ENCODE measurements at regions of chrX and their contacts with region 1.

Region 1: DNA sequence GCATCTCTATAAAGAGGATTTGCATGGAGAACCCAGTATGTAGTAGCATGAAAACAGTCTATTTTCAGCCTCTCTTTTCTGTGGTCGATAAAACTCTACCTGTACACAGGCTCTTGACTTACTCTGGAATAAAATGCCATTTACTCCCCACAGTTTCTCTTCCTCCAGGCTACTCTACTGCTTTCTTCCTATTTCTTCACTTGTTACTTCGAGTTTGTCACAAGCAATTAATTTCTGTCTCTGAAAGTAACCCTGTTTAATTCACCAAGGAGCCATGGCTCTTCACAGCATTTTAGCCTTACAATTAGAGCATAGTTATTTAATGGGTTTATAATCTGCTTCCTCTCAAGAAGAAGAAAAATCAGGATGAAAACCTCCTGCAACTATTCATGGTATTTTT is 472.9 kb upstream of the PRKX start:
- DNase-seq: no peak

Region 2: DNA sequence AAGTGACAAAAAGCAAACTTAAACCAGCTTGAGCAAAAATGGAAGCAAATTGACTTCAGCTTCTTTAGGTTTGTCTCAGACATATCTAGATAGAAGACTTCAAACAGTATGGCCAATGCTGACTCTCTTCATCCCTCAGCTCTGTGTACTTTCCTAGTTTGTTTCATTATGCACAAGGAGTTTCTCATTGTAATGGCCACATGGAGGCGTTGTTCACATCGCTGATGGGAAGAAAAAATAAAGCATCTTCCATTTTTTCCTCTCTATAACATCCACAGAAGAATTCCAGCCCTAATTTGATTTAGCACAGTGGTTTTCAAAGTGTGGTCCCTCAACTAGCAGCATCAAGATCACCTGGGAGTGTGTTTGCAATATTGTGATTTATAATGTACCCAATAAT is 75.4 kb before region 1 on chrX:
- intact Hi-C with region 1: no loop called
- DNase-seq: no peak

Region 3: DNA sequence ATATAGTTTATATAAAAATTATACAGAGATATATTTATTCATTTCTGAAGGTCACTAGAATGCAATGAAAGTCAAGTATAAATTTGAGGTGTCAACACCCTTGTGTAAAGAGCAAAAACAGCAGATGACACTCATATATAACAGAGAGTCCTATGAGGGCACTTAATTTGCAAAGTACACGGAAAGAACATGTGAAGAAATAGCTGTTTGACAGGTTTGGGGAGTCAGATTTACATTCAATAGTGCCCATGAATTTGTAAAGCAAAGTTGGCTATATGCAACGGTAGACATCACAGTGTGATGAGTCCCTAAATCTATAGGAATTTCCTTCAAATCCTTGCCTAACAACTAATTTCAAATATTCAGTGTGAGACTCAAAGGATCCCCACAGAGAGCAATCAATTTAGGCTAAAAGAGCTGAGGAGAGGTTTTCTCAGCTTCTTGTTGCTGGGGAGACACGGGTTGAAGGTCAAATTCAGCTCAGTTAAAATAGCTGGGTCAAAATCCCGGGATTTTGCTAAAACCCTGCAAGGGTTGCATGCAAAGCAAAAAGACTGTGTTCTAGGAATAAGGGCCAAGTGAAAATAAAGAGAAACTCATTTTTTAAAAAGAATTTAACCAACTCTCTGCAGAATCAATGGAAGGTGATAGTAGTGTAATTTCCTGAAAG is 968.8 kb after region 1 on chrX:
- intact Hi-C with region 1: loop called in 1 of 2 experiments (anchors 5 kb)
- DNase-seq: no peak

Measured in posterior vena cava (tissue), 2 donors.